H1 (cell line): ENCODE measurements at regions of chr6 and their contacts with region 1.

Region 1: DNA sequence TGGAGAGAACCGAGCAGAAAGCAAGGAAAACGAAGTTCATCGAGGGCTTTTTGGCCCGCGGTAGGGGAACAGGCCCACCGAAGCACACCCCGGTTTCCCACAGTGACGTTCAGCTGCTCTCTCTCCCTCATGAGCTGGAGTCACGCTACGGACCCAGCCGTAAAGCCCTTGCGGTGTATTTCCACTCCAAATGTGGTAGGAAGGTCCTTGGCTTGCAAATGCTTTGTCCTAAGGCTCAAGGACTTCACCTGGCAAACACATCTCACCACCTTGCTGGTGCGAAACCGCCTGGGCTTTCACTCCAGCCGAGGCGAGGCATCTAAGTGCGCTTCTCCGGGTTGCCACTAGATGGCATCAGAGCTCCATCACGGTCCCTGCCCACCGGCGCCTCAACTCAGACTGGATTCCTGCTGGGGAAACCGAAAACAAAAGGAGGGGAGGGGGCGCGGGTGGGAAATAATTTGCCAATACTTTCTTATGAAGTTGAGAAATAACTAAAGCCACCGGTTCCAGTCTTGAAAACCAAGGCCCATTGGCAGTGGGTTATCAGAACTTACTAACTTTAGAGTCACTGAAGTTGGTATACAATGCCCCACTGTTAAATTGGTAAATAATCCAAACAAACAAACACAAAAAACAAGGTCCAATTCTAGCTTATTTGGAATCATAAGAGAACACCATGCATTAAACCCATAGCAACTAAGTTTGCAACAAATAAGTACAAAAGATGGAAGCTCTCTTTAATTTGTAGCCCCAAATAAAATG is 13.4 kb upstream of the FOXC1 start:
- DNase-seq: peak in 1 of 2 experiments; percentile 87
- H3K4me3 ChIP-seq: no peak overlapping the region
- H3K27ac ChIP-seq: no peak overlapping the region
- H3K4me1 ChIP-seq: peaks cover 0 to 4% (median 1%) of the 10 kb centered on the region in 4 experiments; a peak in 4 of 7 replicates
- H3K27me3 ChIP-seq: peaks cover 0 to 3% (median 0%) of the 10 kb centered on the region in 4 experiments; a peak in 3 of 7 replicates
- CTCF ChIP-seq: peak; percentile 75 to 94 (median 82)
- EP300 ChIP-seq: no peak
- POLR2A ChIP-seq: no peak
- RAD21 ChIP-seq: peak; percentile 96 to 97

Region 2: DNA sequence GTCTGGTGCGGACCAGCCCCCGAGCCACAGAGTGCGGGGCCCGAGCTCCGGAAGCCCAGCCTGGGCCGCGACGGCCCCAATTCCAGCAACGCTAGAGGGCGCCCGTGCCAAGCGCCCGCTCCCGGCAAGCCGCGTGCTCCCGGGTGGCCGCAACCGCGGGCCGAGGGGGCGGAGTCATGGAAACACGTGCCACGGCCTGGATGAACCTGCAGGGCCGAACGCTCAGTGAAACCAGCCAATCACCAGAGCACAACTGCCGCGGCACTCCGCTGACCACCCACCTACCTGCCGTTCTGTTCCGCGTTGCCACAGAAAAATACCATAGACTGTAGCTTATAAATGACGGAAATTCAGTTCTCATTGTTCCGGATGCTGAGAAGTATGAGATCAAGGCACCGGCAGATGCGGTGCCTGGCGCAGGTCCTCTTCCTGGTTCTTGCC is 72.2 kb before region 1 on chr6:
- CTCF ChIA-PET with region 1: interaction called, 12 read pairs
- POLR2A ChIA-PET with region 1: no interaction called
- DNase-seq: peak; percentile 61 to 94
- H3K4me3 ChIP-seq: peak overlapping the region in 1 of 4 experiments; percentile 29; a peak in 1 of 8 replicates
- H3K27ac ChIP-seq: no peak overlapping the region
- H3K4me1 ChIP-seq: peaks cover 0 to 4% (median 3%) of the 10 kb centered on the region in 4 experiments; a peak in 5 of 7 replicates
- H3K27me3 ChIP-seq: peaks cover 4 to 48% (median 39%) of the 10 kb centered on the region in 4 experiments
- CTCF ChIP-seq: peak; percentile 67 to 84 (median 81)
- EP300 ChIP-seq: no peak
- POLR2A ChIP-seq: no peak
- RAD21 ChIP-seq: peak; percentile 73 to 84

Region 3: DNA sequence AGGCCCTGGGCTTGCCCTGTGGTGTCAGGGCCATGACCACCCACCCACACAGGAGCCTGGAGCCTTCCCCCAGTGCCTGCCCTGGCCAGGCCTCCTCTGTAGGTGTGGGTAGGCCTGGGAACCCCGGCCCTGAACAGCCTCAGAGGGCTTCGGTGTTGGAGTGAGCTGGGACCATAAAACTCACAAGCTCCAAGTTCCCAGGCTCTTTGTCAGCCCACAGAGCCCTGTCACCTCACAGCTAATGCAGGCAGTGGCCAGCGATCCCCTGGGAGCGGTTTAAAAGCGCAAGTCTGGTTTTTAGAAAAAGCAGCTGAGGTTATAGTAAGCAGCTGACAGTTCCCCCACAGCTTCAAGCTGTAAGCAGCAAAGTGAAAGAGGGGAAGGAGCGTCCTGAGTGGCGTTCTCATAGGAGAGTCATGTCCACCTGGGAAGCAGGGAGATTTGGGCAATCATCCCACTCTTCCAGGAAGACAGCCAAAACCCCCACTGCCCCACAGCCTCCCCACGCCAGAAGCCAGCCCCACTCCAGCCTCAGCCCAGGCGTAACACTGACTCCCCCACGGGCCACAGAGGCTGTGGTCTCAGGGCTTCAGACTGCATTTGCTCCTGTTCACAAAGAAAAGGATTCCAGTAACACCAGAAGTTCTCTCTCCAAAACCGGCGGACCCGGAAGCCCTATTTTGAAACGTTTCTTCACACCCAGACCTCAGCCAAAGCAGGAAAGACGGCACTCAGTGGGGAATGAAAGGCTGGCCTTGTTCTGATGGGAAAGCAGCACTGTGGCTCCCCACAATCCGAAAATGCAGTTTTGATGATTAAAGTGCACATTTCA is 20.8 kb before region 1 on chr6:
- CTCF ChIA-PET with region 1: interaction called, 20 read pairs
- POLR2A ChIA-PET with region 1: no interaction called
- DNase-seq: no peak
- H3K4me3 ChIP-seq: no peak overlapping the region
- H3K27ac ChIP-seq: no peak overlapping the region
- H3K4me1 ChIP-seq: peaks cover 0 to 8% (median 4%) of the 10 kb centered on the region in 4 experiments; a peak in 4 of 7 replicates
- H3K27me3 ChIP-seq: peaks cover 0 to 3% (median 0%) of the 10 kb centered on the region in 4 experiments; a peak in 1 of 7 replicates
- CTCF ChIP-seq: no peak
- EP300 ChIP-seq: no peak
- POLR2A ChIP-seq: no peak
- RAD21 ChIP-seq: no peak

Region 4: GRCh38 chr6:1584996-1585668 is 11.1 kb before region 1 on chr6:
- CTCF ChIA-PET with region 1: interaction called, 13 read pairs
- POLR2A ChIA-PET with region 1: no interaction called
- DNase-seq: peak in 1 of 2 experiments; percentile 4
- H3K4me3 ChIP-seq: no peak overlapping the region
- H3K27ac ChIP-seq: no peak overlapping the region
- H3K4me1 ChIP-seq: no peaks in the 10 kb centered on the region
- H3K27me3 ChIP-seq: no peaks in the 10 kb centered on the region
- CTCF ChIP-seq: no peak
- EP300 ChIP-seq: no peak
- POLR2A ChIP-seq: no peak
- RAD21 ChIP-seq: no peak

Region 5: DNA sequence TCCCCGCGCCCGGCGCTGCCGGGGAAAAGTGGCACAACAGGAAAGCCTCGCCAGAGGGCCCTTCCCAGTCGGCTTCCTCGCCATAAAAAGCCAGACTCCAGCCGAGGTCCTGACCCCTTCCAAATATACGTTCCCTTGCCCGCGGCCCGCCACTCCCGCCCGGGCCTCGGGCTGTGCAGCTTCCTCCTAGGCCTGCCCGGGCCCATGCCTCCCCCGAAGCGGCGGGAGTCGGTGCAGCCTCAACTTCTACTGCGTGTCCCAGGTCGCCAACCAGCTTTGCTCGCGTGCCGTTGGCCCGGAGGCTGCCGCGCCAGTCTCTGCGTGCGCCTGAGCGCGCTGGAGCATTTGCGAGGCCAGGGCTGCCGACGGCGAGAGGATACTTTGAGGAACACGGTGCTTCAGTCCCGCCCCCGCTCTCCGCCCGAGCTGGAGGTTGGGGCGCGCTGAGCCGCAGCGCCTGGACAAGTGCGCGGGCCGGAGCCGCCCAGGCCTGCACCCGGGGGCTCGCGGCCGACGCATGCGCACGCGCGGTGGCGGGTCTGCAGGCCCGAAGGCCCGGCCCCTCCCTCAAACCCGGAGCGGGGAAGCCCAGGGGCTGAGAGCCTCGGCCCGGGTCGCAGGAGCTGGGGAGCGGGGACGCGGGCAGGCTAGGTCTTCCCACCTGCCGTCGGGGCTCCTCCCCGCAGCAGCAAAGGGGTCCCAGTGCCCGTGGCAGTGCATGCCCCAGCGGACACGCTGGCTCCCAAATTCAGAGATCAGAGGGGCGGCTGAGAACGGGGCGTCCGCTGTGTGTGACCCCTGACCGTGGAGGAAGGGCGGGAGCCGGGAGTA is 23.6 kb after region 1 on chr6:
- CTCF ChIA-PET with region 1: interaction called, 11 read pairs
- POLR2A ChIA-PET with region 1: no interaction called
- DNase-seq: peak in 1 of 2 experiments; percentile 83
- H3K4me3 ChIP-seq: peak overlapping the region; percentile 22 to 57 (median 28); a peak in 7 of 8 replicates
- H3K27ac ChIP-seq: no peak overlapping the region
- H3K4me1 ChIP-seq: peaks cover 0 to 26% (median 18%) of the 10 kb centered on the region in 4 experiments; a peak in 6 of 7 replicates
- H3K27me3 ChIP-seq: peaks cover 98 to 100% (median 100%) of the 10 kb centered on the region in 4 experiments
- CTCF ChIP-seq: no peak
- EP300 ChIP-seq: no peak
- POLR2A ChIP-seq: no peak
- RAD21 ChIP-seq: no peak

Region 6: GRCh38 chr6:2448820-2449571 is 852.7 kb after region 1 on chr6:
- CTCF ChIA-PET with region 1: interaction called, 12 read pairs
- POLR2A ChIA-PET with region 1: no interaction called
- DNase-seq: no peak
- H3K4me3 ChIP-seq: peak overlapping the region; percentile 11 to 47 (median 23); a peak in 5 of 8 replicates
- H3K27ac ChIP-seq: no peak overlapping the region
- H3K4me1 ChIP-seq: no peaks in the 10 kb centered on the region
- H3K27me3 ChIP-seq: peaks cover 0 to 7% (median 2%) of the 10 kb centered on the region in 4 experiments; a peak in 5 of 7 replicates
- CTCF ChIP-seq: peak; percentile 40 to 93 (median 76)
- EP300 ChIP-seq: no peak
- POLR2A ChIP-seq: no peak
- RAD21 ChIP-seq: peak; percentile 95 to 96